ENCODE measurements at regions of chr7 and their contacts with region 1.

Region 1: DNA sequence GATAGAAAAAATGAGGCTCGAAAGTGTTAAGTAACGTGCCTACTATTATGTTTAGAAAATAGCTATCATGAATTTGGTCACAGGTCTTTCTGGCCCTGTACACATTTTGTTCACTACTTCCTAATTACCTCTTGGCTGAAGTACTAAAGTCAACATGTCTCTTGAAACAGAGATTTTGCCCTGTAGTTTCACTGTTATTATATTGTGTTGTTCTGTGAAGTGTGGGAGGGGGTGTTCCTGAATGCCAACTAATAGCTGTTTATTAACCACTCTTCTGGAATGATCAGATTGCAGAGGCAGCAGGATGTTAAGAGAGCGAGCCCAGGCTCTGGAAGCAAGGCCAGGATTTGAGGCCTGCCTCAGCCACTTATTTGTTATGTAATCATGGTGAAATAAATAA is 72.1 kb downstream of the RNF133 start:
- DNase-seq: no peak
- H3K4me3 ChIP-seq: no peak overlapping the region
- H3K27ac ChIP-seq: no peak overlapping the region
- H3K4me1 ChIP-seq: no peaks in the 10 kb centered on the region
- H3K27me3 ChIP-seq: no peaks in the 10 kb centered on the region
- CTCF ChIP-seq: no peak

Region 2: GRCh38 chr7:121575194-121575765 is 1051.5 kb before region 1 on chr7:
- CTCF ChIA-PET with region 1: no interaction called
- POLR2A ChIA-PET with region 1: interaction called, 11 read pairs
- intact Hi-C with region 1: no loop called
- DNase-seq: no peak
- H3K4me3 ChIP-seq: no peak overlapping the region
- H3K27ac ChIP-seq: no peak overlapping the region
- H3K4me1 ChIP-seq: no peaks in the 10 kb centered on the region
- H3K27me3 ChIP-seq: no peaks in the 10 kb centered on the region
- CTCF ChIP-seq: no peak

Region 3: DNA sequence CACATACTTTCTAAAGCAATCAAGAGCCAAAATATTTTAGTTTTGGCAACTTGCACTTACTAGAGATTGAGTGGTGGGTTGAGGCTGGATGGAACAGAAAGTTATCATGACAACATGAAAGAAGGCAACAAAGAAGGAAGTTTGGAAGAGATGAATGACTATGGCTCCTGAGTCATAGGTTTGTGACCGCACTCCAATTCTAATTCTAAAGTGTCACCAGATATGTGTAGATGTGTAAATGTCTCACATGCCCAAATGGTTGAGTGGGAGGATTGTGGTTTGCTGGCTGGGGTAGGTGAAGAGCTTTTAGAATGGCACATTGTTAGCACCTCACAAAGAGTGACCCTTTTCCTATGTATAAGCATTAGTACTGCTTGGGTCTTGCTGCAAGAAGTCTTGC is 348.6 kb after region 1 on chr7:
- CTCF ChIA-PET with region 1: no interaction called
- POLR2A ChIA-PET with region 1: no interaction called
- intact Hi-C with region 1: no loop called
- DNase-seq: peak in 1 of 2 experiments; percentile 12
- H3K4me3 ChIP-seq: no peak overlapping the region
- H3K27ac ChIP-seq: no peak overlapping the region
- H3K4me1 ChIP-seq: no peaks in the 10 kb centered on the region
- H3K27me3 ChIP-seq: no peaks in the 10 kb centered on the region
- CTCF ChIP-seq: no peak